ENCODE measurements at regions of chr16 and their contacts with region 1.

Region 1: GRCh38 chr16:2350500-2350899 is 10.0 kb upstream of the ABCA3 start:
- DNase-seq: no peak
- H3K4me3 ChIP-seq: no peak overlapping the region
- CTCF ChIP-seq: no peak
- POLR2A ChIP-seq: no peak

Region 2: GRCh38 chr16:2415085-2415484 is 64.6 kb after region 1 on chr16:
- intact Hi-C with region 1: loop called (anchors 5 kb)
- DNase-seq: no peak
- H3K4me3 ChIP-seq: no peak overlapping the region
- CTCF ChIP-seq: no peak
- POLR2A ChIP-seq: no peak

Measured in lower leg skin (tissue), 4 donors.